ENCODE measurements at regions of chr1 and their contacts with region 1.

Region 1: GRCh38 chr1:224851210-224851847 is 78.1 kb upstream of the DNAH14 start:
- DNase-seq: peak; percentile 73
- ATAC-seq: peak; percentile 73 to 79
- H3K4me3 ChIP-seq: no peak overlapping the region
- H3K27ac ChIP-seq: no peak overlapping the region
- H3K4me1 ChIP-seq: no peaks in the 10 kb centered on the region
- H3K27me3 ChIP-seq: no peaks in the 10 kb centered on the region
- CTCF ChIP-seq: peak; percentile 69

Region 2: DNA sequence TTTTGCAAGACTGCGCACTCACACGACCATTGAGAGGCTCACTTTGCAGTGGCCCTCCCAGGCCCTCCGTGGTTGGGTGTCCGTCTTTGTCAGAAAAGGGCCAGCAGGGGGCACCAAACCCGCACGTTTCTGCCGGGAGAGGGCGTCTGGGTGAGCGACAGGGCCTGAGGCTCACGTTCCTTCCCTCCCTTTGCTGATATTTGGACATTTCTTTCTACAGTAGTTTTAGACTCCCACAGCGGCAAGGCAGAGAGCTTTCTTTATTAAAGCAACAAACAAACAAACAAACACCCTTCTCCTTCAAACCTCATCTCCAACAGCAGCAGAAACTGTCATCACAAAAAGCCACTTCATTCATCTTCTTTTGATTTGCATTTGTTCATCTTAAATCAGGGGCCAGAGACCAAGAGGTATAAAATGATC is 337.5 kb before region 1 on chr1:
- intact Hi-C with region 1: loop called (anchors 5 kb)
- DNase-seq: peak; percentile 85
- ATAC-seq: peak; percentile 92 to 94
- H3K4me3 ChIP-seq: no peak overlapping the region
- H3K27ac ChIP-seq: no peak overlapping the region
- H3K4me1 ChIP-seq: no peaks in the 10 kb centered on the region
- H3K27me3 ChIP-seq: no peaks in the 10 kb centered on the region
- CTCF ChIP-seq: peak; percentile 91

Region 3: GRCh38 chr1:224644553-224645154 is 206.7 kb before region 1 on chr1:
- intact Hi-C with region 1: loop called (anchors 5 kb)
- DNase-seq: no peak
- ATAC-seq: peak; percentile 51 to 61
- H3K4me3 ChIP-seq: no peak overlapping the region
- H3K27ac ChIP-seq: no peak overlapping the region
- H3K4me1 ChIP-seq: no peaks in the 10 kb centered on the region
- H3K27me3 ChIP-seq: no peaks in the 10 kb centered on the region
- CTCF ChIP-seq: peak; percentile 84

Region 4: DNA sequence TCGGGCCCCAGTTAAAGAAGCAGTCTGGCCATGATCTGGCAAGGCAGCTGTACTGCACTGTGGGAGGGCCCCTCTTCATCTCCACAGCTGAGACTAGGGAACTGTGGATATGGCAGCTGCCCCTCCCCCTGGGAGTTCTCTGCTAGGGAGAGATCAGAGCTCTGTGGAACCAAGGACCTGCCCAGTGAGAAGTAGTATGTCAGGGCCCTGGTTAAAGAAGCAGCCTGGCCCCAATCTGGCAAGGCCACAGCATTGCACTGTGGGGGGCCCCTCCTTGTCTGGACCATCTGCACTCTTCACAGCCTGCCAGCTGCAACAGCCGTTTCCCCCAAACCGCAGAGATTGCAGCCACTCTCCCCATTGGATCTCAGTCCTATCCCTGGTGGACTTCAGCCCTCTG is 286.7 kb after region 1 on chr1:
- intact Hi-C with region 1: no loop called
- DNase-seq: no peak
- ATAC-seq: peak in 1 of 2 donors; percentile 29
- H3K4me3 ChIP-seq: no peak overlapping the region
- H3K27ac ChIP-seq: no peak overlapping the region
- H3K4me1 ChIP-seq: no peaks in the 10 kb centered on the region
- H3K27me3 ChIP-seq: no peaks in the 10 kb centered on the region
- CTCF ChIP-seq: no peak

Measured in lower lobe of right lung (tissue), 2 donors.